K562 (cell line): ENCODE measurements at regions of chr16 and their contacts with region 1.

Region 1: DNA sequence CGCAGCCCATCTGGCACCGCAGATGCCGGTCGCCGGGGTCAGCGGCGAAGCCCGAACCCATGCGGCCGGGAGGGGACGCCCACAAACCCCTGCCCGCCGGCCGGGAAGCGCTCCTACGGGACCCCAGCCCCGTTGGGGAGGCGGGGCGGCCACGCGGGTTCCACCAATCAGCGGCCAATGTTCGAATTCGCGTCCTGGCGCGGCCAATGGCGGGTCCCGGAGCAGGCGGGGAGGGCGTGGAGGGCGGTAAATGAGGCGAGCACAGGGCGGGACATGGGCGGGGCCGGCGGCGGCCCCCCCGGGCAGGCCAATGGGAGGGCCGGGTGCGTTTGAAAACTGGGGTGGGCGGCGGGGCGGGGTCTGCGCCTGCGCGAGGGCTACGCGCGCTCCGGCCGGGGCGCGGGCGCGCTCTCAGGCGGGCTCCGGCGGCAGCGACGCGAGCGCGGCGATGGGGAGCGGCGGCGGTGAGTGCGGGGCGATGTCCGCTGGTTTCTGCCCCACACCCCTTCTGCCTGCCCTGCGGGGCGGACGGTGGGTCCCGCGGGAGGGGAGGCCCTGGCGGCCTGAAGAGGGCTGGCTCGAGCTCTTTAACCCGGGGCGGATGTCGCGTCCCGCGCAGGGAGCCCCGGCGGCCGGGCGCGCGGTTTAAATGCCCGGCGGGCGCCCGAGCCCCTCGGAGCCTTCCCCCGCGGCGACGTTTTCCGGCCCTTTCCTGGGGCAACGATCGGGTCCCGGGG is at the start of gene CCNF:
- DNase-seq: peak; percentile 98 to 100 (median 98)
- ATAC-seq: peak; percentile 93
- H3K4me3 ChIP-seq: peak within 1 kb of the TSS; percentile 93
- H3K27ac ChIP-seq: peak within 1 kb of the TSS; percentile 98
- H3K4me1 ChIP-seq: peaks cover 21 to 34% of the 10 kb centered on the region in 2 experiments; a peak in 4 of 5 replicates
- H3K27me3 ChIP-seq: no peaks in the 10 kb centered on the region
- CTCF ChIP-seq: no peak
- EP300 ChIP-seq: no peak
- POLR2A ChIP-seq: peak; percentile 21
- RAD21 ChIP-seq: no peak; a peak in 1 of 4 replicates
- polyA plus RNA-seq, gene CCNF: 4.1 to 5.4 TPM

Region 2: DNA sequence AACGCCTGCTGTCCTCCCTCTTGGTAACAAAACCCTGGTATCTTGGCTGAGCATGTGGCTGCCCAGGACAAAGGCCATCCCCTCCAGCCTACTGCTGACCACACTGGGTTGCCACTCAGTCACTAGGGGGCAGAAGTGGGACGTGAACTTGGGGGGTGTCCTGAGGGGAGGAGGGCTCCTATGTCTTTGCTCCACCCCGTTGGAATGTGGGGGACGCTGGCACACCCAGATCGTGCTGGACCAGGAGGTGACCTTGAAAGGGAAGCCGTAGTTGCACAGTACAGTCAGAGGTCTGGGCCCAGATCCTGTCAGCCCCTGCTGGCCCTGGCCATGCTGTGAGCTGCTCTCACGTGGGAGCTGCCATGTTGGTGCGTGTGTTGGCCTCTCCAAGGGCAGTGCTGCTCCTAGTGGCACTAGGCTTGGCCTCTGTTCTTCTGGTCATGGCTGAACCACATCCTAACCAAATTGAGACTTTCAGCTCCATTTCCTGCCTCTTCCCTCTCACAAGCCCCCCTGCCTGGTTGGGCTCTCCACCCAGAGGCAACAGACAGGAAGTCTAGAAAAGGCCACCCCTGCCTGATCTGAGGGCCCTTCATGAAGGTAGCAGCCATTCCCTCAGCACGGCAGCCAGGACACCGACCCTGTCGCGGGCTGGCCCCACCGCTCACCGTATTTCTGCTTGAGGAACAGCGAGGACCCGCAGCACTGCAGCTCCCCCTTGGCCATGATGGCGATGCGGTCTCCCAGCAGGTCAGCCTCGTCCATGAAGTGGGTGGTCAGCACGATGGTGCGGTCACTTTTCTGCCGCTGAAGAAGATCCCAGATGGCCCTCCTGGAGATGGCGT is 132.3 kb before region 1 on chr16:
- CTCF ChIA-PET with region 1: no interaction called
- POLR2A ChIA-PET with region 1: interaction called, 3 read pairs
- in situ Hi-C with region 1: no loop called
- intact Hi-C with region 1: loop called (anchors 2 kb)
- DNase-seq: peak; percentile 76 to 87 (median 84)
- ATAC-seq: peak; percentile 98
- H3K4me3 ChIP-seq: no peak overlapping the region
- H3K27ac ChIP-seq: peak overlapping the region; percentile 76
- H3K4me1 ChIP-seq: peaks cover 6 to 24% of the 10 kb centered on the region in 2 experiments; a peak in 4 of 5 replicates
- H3K27me3 ChIP-seq: no peaks in the 10 kb centered on the region
- CTCF ChIP-seq: peak; percentile 79 to 87 (median 86)
- EP300 ChIP-seq: peak; percentile 19; the same call in 1 of the 2 replicates
- POLR2A ChIP-seq: no peak
- RAD21 ChIP-seq: peak; percentile 65 to 84

Region 3: DNA sequence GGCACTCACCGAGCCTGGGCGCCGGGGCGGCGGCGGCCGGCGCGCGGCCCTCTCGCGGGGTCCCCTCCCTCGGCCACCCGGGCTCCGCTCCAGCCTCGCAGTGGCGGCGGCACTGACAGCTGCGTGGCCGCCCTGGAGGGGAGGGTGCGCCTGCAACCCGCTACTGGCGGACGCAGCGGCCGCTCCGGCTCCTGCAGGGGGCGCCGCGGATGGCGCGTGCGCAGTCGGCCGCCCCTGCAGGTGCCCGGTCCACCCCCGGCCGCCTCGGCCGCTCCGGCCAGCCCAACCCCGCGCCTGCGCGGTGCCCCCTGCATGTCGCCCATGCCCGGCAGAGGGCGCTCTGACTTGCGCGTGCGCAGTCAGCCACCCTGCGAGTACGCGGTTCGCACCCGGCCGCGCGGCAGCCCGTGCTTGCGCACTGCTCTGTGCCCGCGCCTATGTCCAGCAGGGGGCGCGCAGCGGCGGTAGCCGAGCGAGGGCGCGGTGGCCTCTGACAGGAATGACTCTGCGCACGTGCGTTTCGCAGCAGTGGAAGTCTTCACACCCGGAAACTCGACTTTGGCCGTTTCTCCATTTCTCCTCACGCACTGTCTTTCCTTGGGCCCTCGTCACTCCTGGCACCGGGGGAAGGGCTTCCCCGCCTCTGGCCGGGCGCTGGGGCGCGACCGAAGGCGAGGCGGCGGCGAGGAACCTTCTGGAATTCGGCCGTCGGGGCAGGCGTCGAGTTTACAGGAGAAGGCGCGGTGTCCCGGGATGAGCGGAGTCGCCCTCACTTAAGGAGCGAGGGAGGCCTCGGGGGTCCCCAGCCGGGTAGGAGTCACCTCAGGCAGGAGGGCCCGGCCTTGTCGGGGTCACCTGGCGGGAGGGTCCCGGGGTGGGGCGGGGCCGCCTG is 88.4 kb before region 1 on chr16 and contains the start of gene ABCA3:
- CTCF ChIA-PET with region 1: interaction called, 12 read pairs
- POLR2A ChIA-PET with region 1: no interaction called
- in situ Hi-C with region 1: no loop called
- intact Hi-C with region 1: no loop called
- DNase-seq: peak; percentile 98 to 99 (median 99)
- ATAC-seq: peak; percentile 90
- H3K4me3 ChIP-seq: peak within 1 kb of the TSS; percentile 96
- H3K27ac ChIP-seq: peak within 1 kb of the TSS; percentile 88
- H3K4me1 ChIP-seq: peaks cover 23 to 43% of the 10 kb centered on the region in 2 experiments
- H3K27me3 ChIP-seq: no peaks in the 10 kb centered on the region
- CTCF ChIP-seq: peak; percentile 98 to 100 (median 99)
- EP300 ChIP-seq: peak; percentile 36; the same call in 1 of the 2 replicates
- POLR2A ChIP-seq: no peak
- RAD21 ChIP-seq: peak; percentile 86 to 89
- polyA plus RNA-seq, gene ABCA3: 0.66 to 0.81 TPM

Region 4: DNA sequence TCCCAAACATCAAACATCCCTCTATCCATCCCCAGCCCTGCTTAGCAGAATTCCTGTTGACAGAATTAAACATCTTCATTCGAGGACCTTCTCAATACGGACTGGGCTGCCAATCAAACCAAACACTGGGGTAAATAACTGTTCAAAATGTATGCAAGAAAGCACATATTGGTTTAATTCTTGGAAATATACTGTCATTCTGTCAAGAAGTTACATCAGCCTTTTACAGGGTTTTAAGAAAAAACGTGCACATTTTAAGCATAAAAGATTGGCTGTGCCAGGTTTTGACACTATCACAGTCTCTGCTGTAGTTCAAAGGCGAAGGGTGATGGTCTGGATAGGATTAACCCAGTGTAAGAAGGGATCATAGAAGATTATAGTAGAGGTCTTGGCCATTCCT is 25.1 kb before region 1 on chr16:
- CTCF ChIA-PET with region 1: no interaction called
- POLR2A ChIA-PET with region 1: no interaction called
- in situ Hi-C with region 1: no loop called
- intact Hi-C with region 1: no loop called
- DNase-seq: no peak
- ATAC-seq: peak; percentile 56
- H3K4me3 ChIP-seq: no peak overlapping the region
- H3K27ac ChIP-seq: no peak overlapping the region
- H3K4me1 ChIP-seq: 0 out of 5 replicates have a peak, but pooled peaks cover 0 to 6% of the 10 kb centered on the region in 2 experiments
- H3K27me3 ChIP-seq: no peaks in the 10 kb centered on the region
- CTCF ChIP-seq: no peak
- EP300 ChIP-seq: no peak
- POLR2A ChIP-seq: no peak
- RAD21 ChIP-seq: no peak

Region 5: GRCh38 chr16:2439598-2439997 is 10.4 kb after region 1 on chr16:
- CTCF ChIA-PET with region 1: no interaction called
- POLR2A ChIA-PET with region 1: interaction called, 17 read pairs
- in situ Hi-C with region 1: no loop called
- intact Hi-C with region 1: no loop called
- DNase-seq: no peak
- ATAC-seq: no peak; the same call in 2 of the 3 replicates
- H3K4me3 ChIP-seq: no peak overlapping the region
- H3K27ac ChIP-seq: no peak overlapping the region
- H3K4me1 ChIP-seq: peaks cover 0 to 3% of the 10 kb centered on the region in 2 experiments; a peak in 1 of 5 replicates
- H3K27me3 ChIP-seq: no peaks in the 10 kb centered on the region
- CTCF ChIP-seq: no peak
- EP300 ChIP-seq: no peak
- POLR2A ChIP-seq: no peak
- RAD21 ChIP-seq: no peak